ENCODE measurements at regions of chr2 and their contacts with region 1.

Region 1: GRCh38 chr2:160970052-160970965 is 189.9 kb upstream of the TANK start:
- DNase-seq: no peak
- H3K4me3 ChIP-seq: no peak overlapping the region
- CTCF ChIP-seq: peak; percentile 55

Region 2: GRCh38 chr2:160324161-160324800 is 646.0 kb before region 1 on chr2:
- CTCF ChIA-PET with region 1: interaction called, 24 read pairs
- POLR2A ChIA-PET with region 1: no interaction called
- DNase-seq: no peak
- H3K4me3 ChIP-seq: no peak overlapping the region
- CTCF ChIP-seq: peak; percentile 62

Region 3: DNA sequence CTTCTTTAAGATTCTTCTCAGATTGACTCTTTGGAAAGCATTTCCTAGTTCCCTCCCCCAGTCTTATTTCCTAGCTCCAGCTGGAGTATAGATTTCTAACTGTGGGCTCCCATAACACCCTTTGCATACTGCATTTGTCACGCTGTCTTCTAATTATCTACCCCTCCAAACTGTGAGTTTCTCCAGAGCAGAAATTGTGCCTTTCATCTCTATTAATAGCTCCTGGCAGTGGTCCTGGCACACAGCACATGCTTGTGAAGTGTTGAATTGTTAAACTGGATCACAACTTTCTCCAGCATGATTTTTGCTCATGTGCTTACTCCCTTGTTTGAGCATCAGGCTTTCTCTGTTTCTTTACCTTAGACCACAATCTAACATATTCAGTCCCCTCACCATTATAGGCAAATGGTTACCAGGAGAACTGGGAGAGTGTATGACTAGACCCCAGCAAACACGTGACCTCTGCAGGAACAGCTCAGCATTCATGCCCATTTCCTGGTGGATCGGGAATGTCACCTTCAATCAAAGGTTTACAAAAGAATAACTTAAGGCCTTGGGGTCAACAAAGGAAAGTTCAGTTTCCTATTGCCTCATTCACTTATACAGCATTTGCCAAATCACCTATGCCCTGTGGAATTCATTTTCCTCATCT is 14.2 kb after region 1 on chr2:
- CTCF ChIA-PET with region 1: interaction called, 10 read pairs
- POLR2A ChIA-PET with region 1: no interaction called
- DNase-seq: no peak
- H3K4me3 ChIP-seq: no peak overlapping the region
- CTCF ChIP-seq: no peak

Region 4: DNA sequence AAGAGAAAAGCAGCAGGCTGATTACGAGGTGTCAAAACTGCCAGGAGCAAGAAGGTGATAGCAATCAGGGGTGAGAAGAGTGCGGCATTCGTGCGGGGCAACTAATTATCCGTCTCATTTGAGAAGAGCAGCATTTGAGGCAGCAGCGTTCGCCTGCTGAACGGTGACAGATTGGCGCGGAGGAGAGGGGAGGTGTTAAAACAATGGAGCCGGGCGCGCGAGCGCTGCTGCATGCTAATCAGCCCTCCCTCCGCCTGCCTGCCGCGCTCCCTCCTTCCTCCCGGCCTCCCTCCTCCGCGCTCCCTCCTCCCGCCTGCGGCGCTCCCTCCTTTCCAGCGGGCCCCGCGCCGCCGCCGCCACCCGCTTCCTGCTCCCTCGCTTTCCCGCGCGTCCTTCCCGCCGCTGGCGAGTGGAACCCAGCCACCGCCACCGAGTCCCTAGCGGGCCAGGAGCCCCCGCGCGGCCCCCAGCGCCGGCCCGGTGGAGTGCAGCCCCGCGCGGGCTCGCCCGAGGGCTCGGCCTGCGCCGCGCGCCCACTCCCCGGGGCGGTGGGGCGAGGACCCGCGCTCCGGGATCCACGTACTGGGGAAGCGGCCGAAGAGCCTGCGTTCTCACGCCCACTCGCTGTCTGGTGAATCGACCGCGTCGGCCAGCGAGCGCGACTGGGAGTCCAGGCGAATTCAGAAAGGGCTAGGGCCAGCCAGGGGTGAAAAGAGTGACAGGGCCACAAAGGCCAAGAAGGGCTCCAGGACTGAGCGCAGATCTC is 268.4 kb after region 1 on chr2:
- CTCF ChIA-PET with region 1: no interaction called
- POLR2A ChIA-PET with region 1: no interaction called
- DNase-seq: no peak
- H3K4me3 ChIP-seq: peak overlapping the region; percentile 64
- CTCF ChIP-seq: no peak

Measured in AG04449 (cell line).